Sigmoid colon (tissue), 7 donors: ENCODE measurements at regions of chr10 and their contacts with region 1.

Region 1: GRCh38 chr10:122112625-122113160 is 123.7 kb downstream of the TACC2 start:
- DNase-seq: peak; percentile 97
- H3K4me3 ChIP-seq: peak overlapping the region; percentile 72 to 91 (median 76)
- H3K27ac ChIP-seq: peak overlapping the region; percentile 99 to 100 (median 100)
- H3K4me1 ChIP-seq: peaks cover 0 to 49% (median 40%) of the 10 kb centered on the region in 4 donors
- H3K27me3 ChIP-seq: no peaks in the 10 kb centered on the region
- CTCF ChIP-seq: peak in 3 of 4 experiments; percentile 24 to 58 (median 29)
- EP300 ChIP-seq: no peak
- POLR2A ChIP-seq: peak in 1 of 2 donors; percentile 37

Region 2: GRCh38 chr10:121927841-121928527 is 184.7 kb before region 1 on chr10 and contains the start of gene ATE1:
- intact Hi-C with region 1: loop called (anchors 2 kb)
- DNase-seq: peak; percentile 95
- H3K4me3 ChIP-seq: peak within 1 kb of the TSS; percentile 78 to 100 (median 92)
- H3K27ac ChIP-seq: peak within 1 kb of the TSS; percentile 92 to 99 (median 98)
- H3K4me1 ChIP-seq: peaks cover 3 to 41% (median 18%) of the 10 kb centered on the region in 4 donors
- H3K27me3 ChIP-seq: no peaks in the 10 kb centered on the region
- CTCF ChIP-seq: no peak
- EP300 ChIP-seq: no peak
- POLR2A ChIP-seq: peak; percentile 61 to 79
- total RNA-seq, gene ATE1: 31.4 to 49.6 (median 37.0) TPM

Region 3: DNA sequence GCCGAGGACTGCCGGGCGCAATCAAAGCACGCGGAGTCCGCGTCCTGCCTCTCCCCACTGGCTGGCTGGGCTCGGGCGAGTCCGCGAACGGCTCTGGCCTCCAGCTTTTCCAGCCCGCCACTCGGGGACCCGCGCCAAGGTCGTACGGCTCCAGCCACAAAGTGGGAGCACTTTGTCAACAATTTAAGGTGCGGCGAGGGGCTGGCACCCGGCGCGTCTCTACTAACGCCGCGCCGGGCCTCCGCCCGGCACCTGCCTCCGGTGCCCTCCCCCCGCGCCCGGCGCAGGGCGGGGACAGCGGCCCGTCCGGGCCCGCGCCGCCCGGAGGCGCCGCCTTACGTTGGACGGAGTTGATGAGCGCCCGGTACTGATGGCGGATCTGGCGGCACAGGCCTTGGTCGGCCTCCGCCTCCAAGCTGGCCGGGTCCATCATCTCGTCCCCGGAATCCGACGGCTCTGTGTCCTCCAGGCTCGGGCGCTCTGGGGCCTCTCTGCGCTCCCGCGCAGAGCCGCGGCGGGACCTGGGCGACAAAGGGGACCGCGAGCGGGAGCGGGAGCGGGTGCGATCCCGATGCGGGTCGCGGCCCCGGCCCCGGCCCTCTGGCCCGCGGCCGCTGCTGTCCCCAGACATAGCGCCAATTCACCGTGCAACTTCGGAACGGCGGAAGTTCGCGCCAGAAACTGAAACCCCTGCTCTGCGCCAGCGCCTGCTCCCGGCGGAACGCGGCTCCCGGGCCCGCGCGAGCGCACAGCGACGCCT is 138.0 kb before region 1 on chr10 and contains the start of gene NSMCE4A:
- intact Hi-C with region 1: loop called (anchors 2 kb)
- DNase-seq: peak; percentile 89
- H3K4me3 ChIP-seq: peak within 1 kb of the TSS; percentile 72 to 92 (median 82)
- H3K27ac ChIP-seq: peak within 1 kb of the TSS; percentile 96 to 98 (median 97)
- H3K4me1 ChIP-seq: peaks cover 0 to 30% (median 27%) of the 10 kb centered on the region in 4 donors
- H3K27me3 ChIP-seq: no peaks in the 10 kb centered on the region
- CTCF ChIP-seq: no peak
- EP300 ChIP-seq: no peak
- POLR2A ChIP-seq: no peak
- total RNA-seq, gene NSMCE4A: 104 to 160 (median 118) TPM

Region 4: GRCh38 chr10:121994390-121994961 is 118.2 kb before region 1 on chr10:
- intact Hi-C with region 1: loop called (anchors 2 kb)
- DNase-seq: peak; percentile 92
- H3K4me3 ChIP-seq: peak overlapping the region; percentile 15 to 36 (median 31)
- H3K27ac ChIP-seq: peak overlapping the region; percentile 83 to 89 (median 88)
- H3K4me1 ChIP-seq: peaks cover 0 to 68% (median 63%) of the 10 kb centered on the region in 4 donors
- H3K27me3 ChIP-seq: no peaks in the 10 kb centered on the region
- CTCF ChIP-seq: no peak
- EP300 ChIP-seq: peak in 1 of 4 donors; percentile 69
- POLR2A ChIP-seq: peak in 1 of 2 donors; percentile 39

Region 5: GRCh38 chr10:122051251-122051996 is 61.3 kb before region 1 on chr10:
- intact Hi-C with region 1: loop called (anchors 2 kb)
- DNase-seq: peak; percentile 80
- H3K4me3 ChIP-seq: no peak overlapping the region
- H3K27ac ChIP-seq: peak overlapping the region; percentile 58 to 68 (median 66)
- H3K4me1 ChIP-seq: peaks cover 0 to 20% (median 11%) of the 10 kb centered on the region in 4 donors
- H3K27me3 ChIP-seq: no peaks in the 10 kb centered on the region
- CTCF ChIP-seq: peak in 3 of 4 experiments; percentile 53 to 73 (median 61)
- EP300 ChIP-seq: no peak
- POLR2A ChIP-seq: no peak

Region 6: GRCh38 chr10:122062831-122063674 is 49.6 kb before region 1 on chr10:
- intact Hi-C with region 1: loop called (anchors 2 kb)
- DNase-seq: peak; percentile 97
- H3K4me3 ChIP-seq: no peak overlapping the region
- H3K27ac ChIP-seq: peak overlapping the region; percentile 86 to 93 (median 89)
- H3K4me1 ChIP-seq: peaks cover 3 to 26% (median 20%) of the 10 kb centered on the region in 4 donors
- H3K27me3 ChIP-seq: no peaks in the 10 kb centered on the region
- CTCF ChIP-seq: no peak
- EP300 ChIP-seq: peak; percentile 34 to 99 (median 88)
- POLR2A ChIP-seq: no peak

Region 7: GRCh38 chr10:122567056-122567660 is 454.5 kb after region 1 on chr10:
- intact Hi-C with region 1: no loop called
- DNase-seq: peak; percentile 47
- H3K4me3 ChIP-seq: no peak overlapping the region
- H3K27ac ChIP-seq: no peak overlapping the region
- H3K4me1 ChIP-seq: peaks cover 0 to 4% (median 0%) of the 10 kb centered on the region in 4 donors
- H3K27me3 ChIP-seq: peaks cover 0 to 8% (median 0%) of the 10 kb centered on the region in 3 donors
- CTCF ChIP-seq: peak in 2 of 4 experiments; percentile 4 to 18
- EP300 ChIP-seq: no peak
- POLR2A ChIP-seq: no peak